ENCODE measurements at regions of chr5 and their contacts with region 1.

Region 1: GRCh38 chr5:164013077-164013670 is 507.8 kb downstream of the MAT2B start:
- DNase-seq: peak; percentile 41 to 77
- H3K4me3 ChIP-seq: no peak overlapping the region
- H3K27ac ChIP-seq: no peak overlapping the region
- H3K4me1 ChIP-seq: no peaks in the 10 kb centered on the region
- H3K27me3 ChIP-seq: no peaks in the 10 kb centered on the region
- CTCF ChIP-seq: peak in 2 of 3 experiments; percentile 55 to 64; a peak in 2 of 4 replicates
- EP300 ChIP-seq: no peak
- POLR2A ChIP-seq: no peak
- RAD21 ChIP-seq: peak; percentile 92 to 93

Region 2: DNA sequence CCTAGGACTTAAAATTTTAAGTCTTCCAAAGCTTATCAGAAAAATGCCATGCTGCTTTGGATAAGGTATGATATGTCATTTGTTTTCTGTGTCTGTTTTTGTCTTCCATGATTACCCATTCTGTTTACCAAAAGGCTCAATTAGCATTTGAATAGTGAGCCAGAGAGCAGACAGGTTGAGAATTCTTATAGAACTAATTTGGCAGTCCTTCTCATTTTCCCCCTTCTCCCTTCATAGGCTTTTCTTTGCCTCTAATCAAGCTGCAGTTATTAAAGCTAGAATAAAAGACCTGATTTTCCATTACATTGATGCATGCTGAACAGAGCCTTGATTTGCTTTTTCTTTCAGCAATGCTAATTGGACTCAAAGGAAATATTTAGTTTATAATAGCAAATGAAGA is 485.3 kb after region 1 on chr5:
- CTCF ChIA-PET with region 1: interaction called, 30 read pairs
- POLR2A ChIA-PET with region 1: no interaction called
- DNase-seq: no peak
- H3K4me3 ChIP-seq: peak overlapping the region in 1 of 4 experiments; percentile 18; a peak in 1 of 8 replicates
- H3K27ac ChIP-seq: no peak overlapping the region
- H3K4me1 ChIP-seq: peaks cover 0 to 18% (median 4%) of the 10 kb centered on the region in 4 experiments; a peak in 4 of 7 replicates
- H3K27me3 ChIP-seq: no peaks in the 10 kb centered on the region
- CTCF ChIP-seq: no peak
- EP300 ChIP-seq: no peak
- POLR2A ChIP-seq: no peak
- RAD21 ChIP-seq: no peak